RWPE1 (cell line): ENCODE measurements at regions of chr15 and their contacts with region 1.

Region 1: GRCh38 chr15:80875568-80876347 is 96.6 kb downstream of the CEMIP start:
- DNase-seq: no peak
- H3K27ac ChIP-seq: no peak overlapping the region
- CTCF ChIP-seq: no peak

Region 2: DNA sequence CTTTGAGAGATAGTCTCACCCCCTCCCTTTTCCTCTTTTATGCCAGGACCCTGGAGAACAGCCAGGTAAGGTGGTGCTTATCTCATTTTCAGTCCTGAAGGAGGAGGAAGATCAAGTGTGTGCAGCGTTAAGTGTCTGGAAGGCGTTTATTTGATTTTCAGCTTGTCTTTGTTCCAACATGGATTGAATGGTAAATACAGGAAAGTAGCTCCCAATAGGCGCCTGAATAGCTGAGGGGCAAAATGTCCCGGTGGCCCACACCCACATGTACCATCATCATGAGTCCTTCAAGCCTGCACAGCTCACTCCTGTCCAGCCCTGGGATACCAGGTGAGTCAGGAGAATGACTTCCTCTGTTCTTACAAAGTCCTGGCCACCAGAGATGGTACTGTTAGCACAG is 23.1 kb before region 1 on chr15:
- CTCF ChIA-PET with region 1: no interaction called
- POLR2A ChIA-PET with region 1: interaction called, 12 read pairs
- DNase-seq: peak; percentile 61
- H3K27ac ChIP-seq: peak overlapping the region; percentile 55; the same call in 1 of the 2 replicates
- CTCF ChIP-seq: no peak